ENCODE measurements at regions of chr10 and their contacts with region 1.

Region 1: GRCh38 chr10:71880425-71881306 is 29.6 kb upstream of the PSAP start:
- DNase-seq: peak; percentile 83
- H3K4me3 ChIP-seq: no peak overlapping the region; a peak in 1 of 4 replicates
- H3K27ac ChIP-seq: peak overlapping the region in 1 of 2 experiments; percentile 93; a peak in 2 of 4 replicates
- H3K4me1 ChIP-seq: peaks cover 0 to 24% of the 10 kb centered on the region in 2 experiments; a peak in 2 of 4 replicates
- H3K27me3 ChIP-seq: no peaks in the 10 kb centered on the region
- CTCF ChIP-seq: no peak
- EP300 ChIP-seq: peak in 1 of 2 experiments; percentile 88; a peak in 2 of 4 replicates
- RAD21 ChIP-seq: no peak

Region 2: DNA sequence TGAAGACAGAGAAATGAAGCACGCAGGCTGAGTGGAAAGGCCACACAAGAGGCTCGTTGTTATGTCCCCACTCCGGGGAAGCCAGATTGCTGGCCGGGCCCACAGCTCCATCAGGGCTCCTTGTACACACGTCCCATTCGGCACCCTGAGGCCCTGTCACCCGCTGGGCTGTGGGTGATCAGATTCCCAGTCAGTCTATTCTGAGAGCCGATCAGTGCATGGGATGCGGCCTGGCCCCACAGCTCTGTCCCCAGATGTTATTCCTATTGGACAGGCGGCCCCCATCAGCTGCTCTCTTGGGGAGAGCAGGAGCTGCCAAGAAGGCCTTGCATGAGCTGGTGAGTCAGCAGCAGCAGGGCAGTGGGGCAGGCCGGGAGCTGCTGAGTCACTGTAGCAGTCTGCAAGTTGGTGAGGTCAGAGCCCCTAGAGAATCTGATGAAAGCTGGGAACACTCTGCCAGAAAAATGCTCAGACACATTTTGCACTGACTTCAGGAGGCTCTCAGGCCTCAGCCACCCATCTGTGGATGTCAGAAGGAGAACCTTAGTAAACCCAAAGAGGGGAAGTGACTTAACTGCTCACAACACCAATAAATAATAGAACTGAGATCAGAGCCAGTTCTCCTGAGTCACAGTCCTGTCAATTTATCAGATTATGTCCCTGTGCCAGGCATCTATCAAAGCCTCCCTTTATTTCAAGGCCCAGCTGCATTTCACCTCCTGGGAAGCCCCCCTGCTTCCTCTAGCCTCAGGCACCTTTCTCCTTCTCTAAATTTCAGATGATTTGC is 20.2 kb before region 1 on chr10:
- CTCF ChIA-PET with region 1: interaction called, 5 read pairs
- POLR2A ChIA-PET with region 1: interaction called, 10 read pairs
- DNase-seq: peak; percentile 70
- H3K4me3 ChIP-seq: no peak overlapping the region; a peak in 1 of 4 replicates
- H3K27ac ChIP-seq: peak overlapping the region; percentile 90 to 99
- H3K4me1 ChIP-seq: peaks cover 15 to 29% of the 10 kb centered on the region in 2 experiments; a peak in 3 of 4 replicates
- H3K27me3 ChIP-seq: no peaks in the 10 kb centered on the region
- CTCF ChIP-seq: no peak
- EP300 ChIP-seq: peak; percentile 45 to 88
- RAD21 ChIP-seq: no peak

Region 3: GRCh38 chr10:72490951-72491350 is 610.3 kb after region 1 on chr10:
- CTCF ChIA-PET with region 1: no interaction called
- POLR2A ChIA-PET with region 1: no interaction called
- DNase-seq: no peak
- H3K4me3 ChIP-seq: no peak overlapping the region
- H3K27ac ChIP-seq: no peak overlapping the region
- H3K4me1 ChIP-seq: no peaks in the 10 kb centered on the region
- H3K27me3 ChIP-seq: no peaks in the 10 kb centered on the region
- CTCF ChIP-seq: no peak
- EP300 ChIP-seq: no peak
- RAD21 ChIP-seq: no peak

Region 4: DNA sequence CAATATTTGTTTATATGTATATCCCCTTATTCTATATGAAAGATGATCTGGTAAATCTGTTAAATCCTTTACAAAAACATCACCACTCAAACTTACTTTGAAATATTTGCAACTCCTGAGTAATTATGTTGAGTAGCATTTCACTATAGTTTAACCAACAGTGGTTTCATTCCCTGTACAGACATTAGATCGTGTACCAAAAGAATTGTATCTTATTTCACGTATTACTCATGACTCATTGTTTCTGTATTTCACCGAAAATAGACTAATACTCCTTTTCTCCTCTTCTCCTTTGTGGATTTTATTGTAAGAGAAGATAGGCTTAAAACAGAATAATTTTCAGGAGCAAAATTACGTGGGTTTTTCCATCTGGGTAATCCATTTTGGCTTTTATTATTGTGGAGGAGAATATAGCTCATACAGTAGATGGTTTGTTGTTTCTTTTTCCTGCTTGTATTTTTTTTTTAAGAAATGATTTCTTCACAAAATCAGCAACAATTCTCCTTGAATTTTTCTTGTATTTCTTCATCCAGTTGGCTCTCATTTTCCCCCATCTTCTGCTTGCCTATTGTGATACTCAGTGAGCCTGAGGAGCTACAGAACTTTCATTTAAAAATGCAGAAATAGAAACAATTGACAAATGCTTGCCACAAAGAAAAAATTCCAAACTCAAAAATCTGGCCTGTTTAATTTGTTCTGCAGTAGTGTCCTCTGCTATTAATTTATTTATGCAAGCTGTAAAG is 922.3 kb after region 1 on chr10:
- CTCF ChIA-PET with region 1: no interaction called
- POLR2A ChIA-PET with region 1: no interaction called
- DNase-seq: no peak
- H3K4me3 ChIP-seq: peak overlapping the region; percentile 2 to 10; a peak in 3 of 4 replicates
- H3K27ac ChIP-seq: peak overlapping the region; percentile 72 to 77; a peak in 3 of 4 replicates
- H3K4me1 ChIP-seq: peaks cover 6 to 9% of the 10 kb centered on the region in 2 experiments; a peak in 3 of 4 replicates
- H3K27me3 ChIP-seq: no peaks in the 10 kb centered on the region
- CTCF ChIP-seq: no peak
- EP300 ChIP-seq: no peak
- RAD21 ChIP-seq: no peak

Measured in SK-N-SH (cell line).